WTC11 (cell line): ENCODE measurements at regions of chr19 and their contacts with region 1.

Region 1: DNA sequence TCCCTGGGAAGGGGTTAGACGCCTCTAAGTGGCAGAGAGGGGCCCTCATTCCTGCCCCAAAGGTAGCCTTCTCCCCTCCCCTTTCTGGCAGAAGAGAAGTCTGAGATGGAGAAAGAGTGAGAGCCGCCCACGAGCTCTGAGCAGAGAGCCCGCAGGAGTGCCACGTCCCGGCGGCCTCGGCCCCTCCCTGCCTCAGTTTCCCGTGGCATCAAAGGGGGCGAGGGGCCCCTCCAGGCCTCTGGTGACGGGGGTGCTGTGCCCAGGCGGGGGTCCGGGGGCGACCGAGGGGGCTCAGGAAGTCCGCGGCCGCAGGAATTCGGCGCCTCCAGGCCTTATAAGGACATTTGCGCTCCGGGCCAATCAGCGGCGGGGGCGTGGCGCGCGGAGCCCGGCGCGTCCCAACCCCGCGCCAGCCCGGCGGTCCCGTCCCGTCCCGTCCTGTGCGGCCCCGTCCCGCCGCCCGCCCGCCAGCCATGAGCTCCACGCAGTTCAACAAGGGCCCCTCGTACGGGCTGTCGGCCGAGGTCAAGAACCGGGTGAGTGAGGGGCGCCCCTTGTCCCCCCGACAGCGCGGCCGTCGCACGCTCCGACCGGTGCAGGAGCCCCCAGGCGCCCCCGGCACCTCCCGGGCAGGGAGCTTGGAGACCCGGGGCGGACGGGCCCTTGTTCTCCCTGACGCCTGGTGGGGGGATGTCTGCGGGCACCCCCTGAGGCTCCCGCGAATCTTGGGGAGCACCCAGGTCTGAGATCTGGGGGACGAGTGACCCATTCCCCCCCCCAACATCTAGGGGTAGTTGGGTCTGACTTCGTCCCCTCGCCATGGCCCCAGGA is at the start of gene CNN2:
- DNase-seq: peak; percentile 84
- ATAC-seq: peak; percentile 69
- H3K4me3 Mint-ChIP-seq: peak within 1 kb of the TSS; percentile 92
- H3K27ac Mint-ChIP-seq: peak within 1 kb of the TSS; percentile 94
- H3K4me1 Mint-ChIP-seq: peaks cover 3% of the 10 kb centered on the region
- H3K27me3 Mint-ChIP-seq: no peaks in the 10 kb centered on the region
- CTCF ChIP-seq: no peak
- total RNA-seq, gene CNN2: 387 to 391 TPM (median 390 TPM) in 3 replicates

Region 2: DNA sequence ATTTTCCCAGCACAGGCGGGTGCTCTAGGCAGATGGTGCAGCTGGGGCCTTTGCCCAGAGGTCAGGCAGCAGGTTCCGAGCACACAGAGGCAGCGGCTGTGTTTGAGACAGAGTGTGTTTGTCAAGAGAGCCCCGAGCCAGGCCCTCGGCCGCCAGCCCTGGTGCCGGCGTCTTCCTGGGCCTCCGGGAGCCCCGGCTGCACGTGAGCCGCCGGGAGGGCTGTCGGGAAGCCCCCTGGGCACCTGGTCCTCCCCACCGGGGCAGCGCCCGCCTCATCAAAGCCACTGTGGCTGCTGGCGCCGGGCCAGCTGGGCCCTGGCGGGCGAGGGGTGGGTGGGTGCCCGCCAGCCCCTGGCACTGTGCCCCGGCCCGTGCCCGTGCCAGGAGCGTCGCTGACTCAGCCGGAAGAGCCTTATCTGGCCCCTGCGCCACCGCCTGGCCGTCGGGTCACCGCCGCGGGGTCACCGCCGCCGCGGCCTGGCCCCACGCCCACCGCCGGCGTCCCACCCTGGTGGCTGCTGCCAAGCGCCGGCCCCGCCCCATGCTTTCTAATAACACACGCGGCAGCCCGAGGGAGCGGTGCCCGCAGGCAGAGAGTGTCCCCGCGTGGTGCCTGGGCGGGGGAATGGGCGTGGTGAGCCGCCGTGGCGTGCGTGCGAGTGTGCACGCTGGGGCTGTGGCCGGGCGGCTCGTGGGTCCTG is 85.7 kb before region 1 on chr19:
- CTCF ChIA-PET with region 1: no interaction called
- POLR2A ChIA-PET with region 1: no interaction called
- DNase-seq: no peak
- ATAC-seq: no peak
- H3K4me3 Mint-ChIP-seq: no peak overlapping the region
- H3K27ac Mint-ChIP-seq: 0 out of 2 replicates have a peak overlapping the region, but pooled peaks have one; percentile 82
- H3K4me1 Mint-ChIP-seq: no peaks in the 10 kb centered on the region
- H3K27me3 Mint-ChIP-seq: no peaks in the 10 kb centered on the region
- CTCF ChIP-seq: no peak

Region 3: DNA sequence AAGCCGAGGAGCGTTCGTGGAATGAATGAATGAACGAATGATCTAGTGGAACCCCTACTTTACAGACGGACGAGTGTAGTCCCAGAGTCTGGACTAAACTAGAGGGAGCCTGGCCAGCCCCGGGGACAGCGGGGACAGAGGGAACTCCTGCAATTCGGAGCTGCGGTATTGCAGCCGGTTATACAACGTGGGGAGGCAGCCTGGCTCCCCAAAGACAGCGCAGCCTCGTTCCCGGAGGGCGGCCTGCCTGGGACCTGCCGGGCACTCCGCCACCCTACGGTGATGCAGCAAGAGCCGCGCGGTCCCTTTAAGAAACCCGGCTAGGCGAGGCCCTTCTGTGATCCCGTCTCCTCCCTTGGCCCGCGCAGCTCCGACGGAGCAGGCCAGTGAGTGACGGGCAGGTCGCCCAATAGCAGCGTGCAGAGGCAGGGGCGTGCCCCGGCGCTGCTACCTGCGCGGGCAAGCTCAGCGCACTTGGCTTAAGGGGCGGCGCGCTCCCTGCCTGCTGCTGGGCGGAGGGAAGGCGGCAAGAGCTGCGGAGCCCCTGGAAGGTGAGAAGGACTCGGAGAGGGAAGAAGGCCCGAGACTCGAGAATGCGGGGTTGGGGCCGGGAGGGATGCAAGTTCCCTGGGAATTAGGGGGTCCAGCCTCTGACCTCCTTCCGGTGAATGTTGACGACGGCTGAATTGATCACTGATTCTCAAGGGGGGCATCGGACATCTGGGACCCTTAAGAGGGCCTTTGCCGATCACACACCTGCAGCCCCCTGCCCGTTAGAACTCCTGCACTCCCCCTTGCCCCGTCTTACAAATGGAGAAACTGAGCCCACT is 13.5 kb after region 1 on chr19 and contains the start of gene ABCA7:
- CTCF ChIA-PET with region 1: interaction called, 27 read pairs
- POLR2A ChIA-PET with region 1: interaction called, 70 read pairs
- DNase-seq: peak; percentile 100
- ATAC-seq: peak; percentile 84
- H3K4me3 Mint-ChIP-seq: peak within 1 kb of the TSS; percentile 84
- H3K27ac Mint-ChIP-seq: peak within 1 kb of the TSS; percentile 90
- H3K4me1 Mint-ChIP-seq: peaks cover 12% of the 10 kb centered on the region
- H3K27me3 Mint-ChIP-seq: no peaks in the 10 kb centered on the region
- CTCF ChIP-seq: no peak
- total RNA-seq, gene ABCA7: 40.3 to 45.0 TPM (median 41.3 TPM) in 3 replicates